Heart left ventricle (tissue), 16 donors: ENCODE measurements at regions of chr12 and their contacts with region 1.

Region 1: DNA sequence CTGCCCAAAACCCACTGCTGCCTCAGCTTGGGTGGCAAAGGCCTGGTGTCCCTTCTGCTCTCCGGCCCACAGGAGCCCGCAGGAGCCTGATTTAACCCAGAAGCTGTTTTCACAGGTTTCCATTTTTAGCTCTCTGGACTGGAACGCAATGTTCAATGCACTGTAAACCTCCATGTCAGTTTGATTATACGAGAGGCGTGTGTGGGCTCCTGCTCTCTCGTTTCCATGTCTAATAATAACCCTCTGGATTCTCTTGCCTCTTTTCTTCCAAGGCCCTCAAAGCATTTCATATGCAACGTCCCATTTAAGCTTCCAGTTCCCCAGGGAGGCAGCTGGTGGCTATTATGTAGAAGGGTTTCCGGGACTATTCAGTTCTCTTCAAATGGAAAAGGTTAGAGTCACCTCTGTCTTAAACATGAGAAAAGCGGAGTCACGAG is 161.1 kb downstream of the SUDS3 start:
- DNase-seq: peak in 4 of 5 donors; percentile 28 to 66 (median 49)
- ATAC-seq: peak; percentile 94 to 97 (median 96)
- H3K4me3 ChIP-seq: no peak overlapping the region
- H3K27ac ChIP-seq: peak overlapping the region; percentile 66 to 97 (median 91)
- H3K4me1 ChIP-seq: peaks cover 0 to 26% (median 11%) of the 10 kb centered on the region in 12 donors
- H3K27me3 ChIP-seq: no peaks in the 10 kb centered on the region
- CTCF ChIP-seq: no peak
- POLR2A ChIP-seq: peak in 1 of 2 donors; percentile 26

Region 2: GRCh38 chr12:118480235-118480634 is 57.3 kb before region 1 on chr12:
- intact Hi-C with region 1: no loop called
- DNase-seq: no peak
- ATAC-seq: peak in 3 of 4 donors; percentile 38 to 82 (median 68)
- H3K4me3 ChIP-seq: no peak overlapping the region
- H3K27ac ChIP-seq: peak overlapping the region in 2 of 12 donors; percentile 17 to 54
- H3K4me1 ChIP-seq: peaks cover 0 to 6% (median 0%) of the 10 kb centered on the region in 12 donors
- H3K27me3 ChIP-seq: no peaks in the 10 kb centered on the region
- CTCF ChIP-seq: no peak
- POLR2A ChIP-seq: no peak

Region 3: DNA sequence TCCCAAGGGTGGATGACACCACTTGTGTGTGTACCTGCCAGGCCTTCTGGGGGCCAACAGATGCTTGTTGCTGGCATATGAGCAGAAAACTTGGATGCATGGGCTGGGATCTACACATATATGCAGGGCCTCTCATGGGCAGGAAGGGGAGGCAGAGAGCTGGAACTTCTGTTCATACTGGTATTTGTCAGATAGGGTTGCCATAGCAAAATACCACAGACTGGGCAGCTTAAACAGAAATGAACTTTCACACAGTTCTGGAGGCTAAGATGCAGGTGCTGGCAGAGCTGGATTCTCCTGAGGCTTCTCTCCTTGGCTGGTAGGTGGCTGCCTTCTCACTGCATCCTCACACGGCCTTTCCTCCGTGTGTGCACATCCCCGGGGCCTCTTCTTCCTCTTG is 39.3 kb before region 1 on chr12:
- intact Hi-C with region 1: loop called in 1 of 10 experiments (anchors 2 kb)
- DNase-seq: peak in 4 of 5 donors; percentile 11 to 50 (median 26)
- ATAC-seq: peak; percentile 85 to 96 (median 90)
- H3K4me3 ChIP-seq: no peak overlapping the region
- H3K27ac ChIP-seq: peak overlapping the region in 2 of 12 donors; percentile 43 to 62
- H3K4me1 ChIP-seq: peaks cover 0 to 22% (median 0%) of the 10 kb centered on the region in 12 donors
- H3K27me3 ChIP-seq: no peaks in the 10 kb centered on the region
- CTCF ChIP-seq: peak in 9 of 12 donors; percentile 11 to 44 (median 26)
- POLR2A ChIP-seq: no peak

Region 4: GRCh38 chr12:118520214-118521035 is 17.1 kb before region 1 on chr12:
- intact Hi-C with region 1: loop called in 1 of 10 experiments (anchors 2 kb)
- DNase-seq: no peak
- ATAC-seq: peak; percentile 43 to 84 (median 75)
- H3K4me3 ChIP-seq: no peak overlapping the region
- H3K27ac ChIP-seq: no peak overlapping the region
- H3K4me1 ChIP-seq: peaks cover 0 to 11% (median 0%) of the 10 kb centered on the region in 12 donors
- H3K27me3 ChIP-seq: no peaks in the 10 kb centered on the region
- CTCF ChIP-seq: no peak
- POLR2A ChIP-seq: no peak

Region 5: GRCh38 chr12:118560733-118561132 is 23.2 kb after region 1 on chr12:
- intact Hi-C with region 1: loop called in 1 of 10 experiments (anchors 2 kb)
- DNase-seq: peak in 4 of 5 donors; percentile 40 to 61 (median 44)
- ATAC-seq: peak; percentile 94 to 98 (median 96)
- H3K4me3 ChIP-seq: no peak overlapping the region
- H3K27ac ChIP-seq: no peak overlapping the region
- H3K4me1 ChIP-seq: peaks cover 0 to 10% (median 0%) of the 10 kb centered on the region in 12 donors
- H3K27me3 ChIP-seq: no peaks in the 10 kb centered on the region
- CTCF ChIP-seq: peak in 3 of 12 donors; percentile 7 to 26 (median 24)
- POLR2A ChIP-seq: no peak